ENCODE measurements at regions of chr2 and their contacts with region 1.

Region 1: GRCh38 chr2:175366815-175367214 is 185.3 kb upstream of the ATP5MC3 start:
- DNase-seq: peak in 1 of 3 donors; percentile 54
- ATAC-seq: peak; percentile 73
- H3K4me3 ChIP-seq: no peak overlapping the region
- H3K4me1 ChIP-seq: no peaks in the 10 kb centered on the region
- CTCF ChIP-seq: peak; percentile 15

Region 2: GRCh38 chr2:175684457-175684856 is 317.6 kb after region 1 on chr2:
- intact Hi-C with region 1: loop called in 1 of 2 experiments (anchors 10 kb)
- DNase-seq: no peak
- ATAC-seq: no peak
- H3K4me3 ChIP-seq: no peak overlapping the region
- H3K4me1 ChIP-seq: no peaks in the 10 kb centered on the region
- CTCF ChIP-seq: no peak

Region 3: DNA sequence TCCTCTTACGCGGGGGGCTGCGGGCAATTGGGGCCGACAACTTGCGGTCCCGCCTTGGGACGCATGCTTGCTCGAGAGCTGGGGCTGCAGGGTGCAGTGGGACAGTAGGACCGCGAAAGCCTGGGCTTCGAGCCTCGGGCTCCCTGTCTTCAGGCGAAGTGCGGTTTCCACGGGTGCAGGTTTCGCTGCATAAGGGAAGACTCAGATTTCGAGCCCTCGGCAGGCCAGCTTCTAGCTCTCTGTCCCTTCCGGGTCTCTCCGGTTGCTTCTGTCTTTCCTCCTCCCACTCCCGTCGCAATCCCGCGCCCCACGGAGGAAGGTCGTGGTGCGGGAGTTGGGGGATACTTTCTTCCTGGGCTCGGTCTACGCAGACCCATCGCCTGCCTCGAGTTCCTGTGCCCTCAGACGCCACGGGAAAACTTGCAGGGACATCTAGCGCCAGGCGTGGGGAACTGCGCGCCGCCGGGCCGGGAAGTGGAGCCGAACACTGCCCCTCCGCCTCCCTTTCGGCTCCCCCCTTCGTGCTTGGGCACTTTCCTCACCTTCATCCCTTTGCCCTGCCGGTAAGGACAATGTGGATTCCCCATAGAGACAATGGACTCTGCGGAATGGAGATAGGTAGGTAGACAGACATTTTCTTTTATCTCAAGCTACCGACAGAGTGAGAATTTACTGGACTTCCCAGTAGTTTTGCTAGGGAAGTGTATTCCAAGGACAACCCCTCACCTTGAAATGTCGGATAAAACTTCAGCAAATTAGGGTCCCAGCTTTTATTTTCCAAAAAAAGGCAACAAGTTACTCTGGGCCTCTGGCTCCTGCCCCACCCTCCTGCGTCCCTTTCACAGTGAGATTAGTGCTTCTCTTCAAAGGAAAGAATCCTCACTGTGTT is 721.5 kb after region 1 on chr2:
- intact Hi-C with region 1: loop called in 1 of 2 experiments (anchors 10 kb)
- DNase-seq: peak; percentile 54 to 75 (median 72)
- ATAC-seq: peak; percentile 76
- H3K4me3 ChIP-seq: no peak overlapping the region
- H3K4me1 ChIP-seq: peaks cover 18% of the 10 kb centered on the region
- CTCF ChIP-seq: peak; percentile 63